Endothelial cell of umbilical vein (primary cell): ENCODE measurements at regions of chr9 and their contacts with region 1.

Region 1: GRCh38 chr9:131366761-131367401 is 27.0 kb upstream of the PRRC2B start:
- DNase-seq: peak; percentile 60
- H3K4me3 ChIP-seq: no peak overlapping the region
- H3K27ac ChIP-seq: no peak overlapping the region
- H3K4me1 ChIP-seq: no peaks in the 10 kb centered on the region
- H3K27me3 ChIP-seq: no peaks in the 10 kb centered on the region
- CTCF ChIP-seq: peak; percentile 28 to 54
- POLR2A ChIP-seq: no peak

Region 2: GRCh38 chr9:130320723-130321481 is 1046.0 kb before region 1 on chr9:
- CTCF ChIA-PET with region 1: no interaction called
- POLR2A ChIA-PET with region 1: no interaction called
- dilution Hi-C with region 1: no loop called
- intact Hi-C with region 1: no loop called
- DNase-seq: no peak
- H3K4me3 ChIP-seq: no peak overlapping the region
- H3K27ac ChIP-seq: no peak overlapping the region
- H3K4me1 ChIP-seq: no peaks in the 10 kb centered on the region
- H3K27me3 ChIP-seq: peaks cover 12 to 15% of the 10 kb centered on the region in 2 experiments
- CTCF ChIP-seq: peak in 1 of 2 donors; percentile 28
- POLR2A ChIP-seq: no peak

Region 3: DNA sequence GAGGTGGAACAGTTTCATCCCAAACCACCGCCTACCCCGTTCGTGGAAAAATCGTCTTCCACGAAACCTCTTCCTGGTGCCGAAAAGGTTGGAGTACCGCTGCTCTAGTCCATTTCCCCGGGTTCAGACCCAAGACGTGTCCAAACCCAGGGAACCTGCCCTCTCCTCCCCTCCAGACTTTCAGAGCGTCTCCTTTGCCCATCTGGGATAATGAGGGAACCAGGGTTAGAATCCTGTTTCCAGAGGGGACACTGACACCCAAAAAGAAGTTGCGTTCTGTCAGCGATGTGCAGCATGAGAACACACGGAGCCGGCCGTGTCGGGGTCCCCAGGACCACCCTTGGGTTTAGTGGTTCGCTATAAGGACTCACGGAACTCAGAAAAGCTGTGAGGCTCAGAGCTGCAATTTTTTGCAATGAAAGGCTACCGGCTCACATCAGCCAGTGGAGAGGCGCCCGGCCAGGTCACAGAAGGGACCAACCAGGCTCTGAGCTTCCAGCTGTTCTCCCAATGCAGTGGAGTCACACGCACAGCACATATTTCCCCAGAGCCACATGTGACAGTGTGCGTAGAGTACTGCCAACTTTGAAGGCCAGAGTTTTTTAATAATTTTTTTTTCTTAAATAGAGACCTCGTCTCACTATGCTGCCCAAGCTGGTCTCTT is 338.5 kb before region 1 on chr9:
- CTCF ChIA-PET with region 1: no interaction called
- POLR2A ChIA-PET with region 1: no interaction called
- dilution Hi-C with region 1: no loop called
- intact Hi-C with region 1: no loop called
- DNase-seq: no peak
- H3K4me3 ChIP-seq: no peak overlapping the region
- H3K27ac ChIP-seq: no peak overlapping the region
- H3K4me1 ChIP-seq: no peaks in the 10 kb centered on the region
- H3K27me3 ChIP-seq: peaks cover 3% of the 10 kb centered on the region in 2 experiments
- CTCF ChIP-seq: no peak
- POLR2A ChIP-seq: no peak

Region 4: GRCh38 chr9:131310833-131311554 is 55.9 kb before region 1 on chr9:
- CTCF ChIA-PET with region 1: no interaction called
- POLR2A ChIA-PET with region 1: no interaction called
- dilution Hi-C with region 1: no loop called
- intact Hi-C with region 1: no loop called
- DNase-seq: no peak
- H3K4me3 ChIP-seq: no peak overlapping the region
- H3K27ac ChIP-seq: no peak overlapping the region
- H3K4me1 ChIP-seq: no peaks in the 10 kb centered on the region
- H3K27me3 ChIP-seq: no peaks in the 10 kb centered on the region
- CTCF ChIP-seq: no peak
- POLR2A ChIP-seq: no peak

Region 5: GRCh38 chr9:131432597-131433306 is 65.9 kb after region 1 on chr9:
- CTCF ChIA-PET with region 1: interaction called, 13 read pairs
- POLR2A ChIA-PET with region 1: no interaction called
- dilution Hi-C with region 1: no loop called
- intact Hi-C with region 1: no loop called
- DNase-seq: peak; percentile 39
- H3K4me3 ChIP-seq: no peak overlapping the region
- H3K27ac ChIP-seq: peak overlapping the region; percentile 27
- H3K4me1 ChIP-seq: peaks cover 32% of the 10 kb centered on the region
- H3K27me3 ChIP-seq: no peaks in the 10 kb centered on the region
- CTCF ChIP-seq: no peak
- POLR2A ChIP-seq: no peak

Region 6: DNA sequence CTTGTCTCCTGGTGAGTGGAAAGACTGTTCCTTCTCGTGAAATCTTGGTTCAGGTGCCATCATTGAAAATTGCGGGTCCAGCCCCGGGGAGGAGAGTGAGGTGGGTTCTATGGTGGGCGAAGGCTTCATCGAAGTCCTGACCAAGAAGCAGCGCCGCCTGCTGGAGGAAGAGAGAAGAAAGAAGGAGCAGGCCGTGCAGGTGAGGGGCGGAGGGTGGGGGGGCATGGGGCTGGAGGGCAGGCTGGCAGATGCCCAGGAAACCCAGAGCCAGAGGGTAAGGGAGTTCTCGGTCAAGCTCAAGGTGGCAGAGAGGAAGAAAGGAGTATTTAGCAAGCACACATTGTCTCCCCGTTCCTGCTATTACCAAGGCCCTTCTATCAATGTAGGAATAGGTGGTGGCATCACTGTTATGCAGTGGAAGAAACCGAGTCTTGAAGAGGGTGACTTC is 111.6 kb after region 1 on chr9:
- CTCF ChIA-PET with region 1: interaction called, 5 read pairs
- POLR2A ChIA-PET with region 1: no interaction called
- dilution Hi-C with region 1: no loop called
- intact Hi-C with region 1: loop called (anchors 5 kb)
- DNase-seq: peak; percentile 29
- H3K4me3 ChIP-seq: no peak overlapping the region
- H3K27ac ChIP-seq: no peak overlapping the region
- H3K4me1 ChIP-seq: no peaks in the 10 kb centered on the region
- H3K27me3 ChIP-seq: no peaks in the 10 kb centered on the region
- CTCF ChIP-seq: peak; percentile 43 to 66
- POLR2A ChIP-seq: no peak

Region 7: DNA sequence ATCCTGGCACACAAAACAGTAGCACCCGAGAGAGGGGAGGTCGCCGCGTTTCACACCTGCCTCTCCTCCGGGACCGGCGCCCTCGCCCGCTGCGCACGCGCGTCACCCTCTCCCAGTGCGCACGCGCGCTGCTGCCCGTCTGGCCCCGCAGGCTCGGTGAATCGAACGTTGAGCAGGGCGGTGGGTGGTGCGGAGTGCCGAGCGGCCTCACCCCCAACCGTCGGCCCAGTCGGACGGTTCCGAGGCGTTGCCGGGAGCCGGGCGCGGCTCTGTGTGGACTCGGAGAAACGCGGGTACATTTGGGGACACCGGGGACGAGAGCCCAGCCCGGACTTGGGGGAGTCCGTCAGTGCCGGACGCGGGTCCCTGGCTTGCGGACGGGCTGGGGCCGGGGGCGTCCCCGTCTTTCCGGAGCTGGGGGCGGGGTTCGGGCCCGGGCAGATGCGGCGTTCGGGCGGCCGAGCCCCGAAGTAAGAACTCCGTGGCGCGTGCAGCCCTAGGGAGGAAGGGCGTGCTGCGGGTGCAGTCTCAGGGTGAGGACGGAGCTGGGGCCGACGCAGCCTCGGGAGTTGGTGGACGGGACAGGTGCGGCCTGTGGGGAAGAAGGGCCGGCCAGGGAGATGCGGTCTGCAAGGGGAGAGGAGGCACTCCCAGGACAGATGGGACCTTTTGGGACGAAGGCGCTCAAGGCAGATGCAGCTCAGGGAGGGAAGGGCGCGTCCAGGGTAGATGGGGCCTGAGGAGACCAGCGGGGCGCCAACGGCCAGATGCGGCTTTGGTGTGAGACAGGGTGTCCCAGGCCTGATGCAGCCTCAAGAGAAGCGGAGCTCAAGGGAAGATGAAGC is 136.1 kb after region 1 on chr9 and contains the start of gene POMT1:
- CTCF ChIA-PET with region 1: interaction called, 5 read pairs
- POLR2A ChIA-PET with region 1: no interaction called
- dilution Hi-C with region 1: no loop called
- intact Hi-C with region 1: loop called (anchors 2 kb)
- DNase-seq: peak; percentile 86
- H3K4me3 ChIP-seq: peak within 1 kb of the TSS; percentile 61 to 72 (median 62)
- H3K27ac ChIP-seq: no peak within 1 kb of the TSS
- H3K4me1 ChIP-seq: peaks cover 10% of the 10 kb centered on the region
- H3K27me3 ChIP-seq: no peaks in the 10 kb centered on the region
- CTCF ChIP-seq: no peak
- POLR2A ChIP-seq: peak; percentile 68
- total RNA-seq, gene POMT1: 39.1 and 44.7 TPM in 2 replicates